ENCODE measurements at regions of chr12 and their contacts with region 1.

Region 1: DNA sequence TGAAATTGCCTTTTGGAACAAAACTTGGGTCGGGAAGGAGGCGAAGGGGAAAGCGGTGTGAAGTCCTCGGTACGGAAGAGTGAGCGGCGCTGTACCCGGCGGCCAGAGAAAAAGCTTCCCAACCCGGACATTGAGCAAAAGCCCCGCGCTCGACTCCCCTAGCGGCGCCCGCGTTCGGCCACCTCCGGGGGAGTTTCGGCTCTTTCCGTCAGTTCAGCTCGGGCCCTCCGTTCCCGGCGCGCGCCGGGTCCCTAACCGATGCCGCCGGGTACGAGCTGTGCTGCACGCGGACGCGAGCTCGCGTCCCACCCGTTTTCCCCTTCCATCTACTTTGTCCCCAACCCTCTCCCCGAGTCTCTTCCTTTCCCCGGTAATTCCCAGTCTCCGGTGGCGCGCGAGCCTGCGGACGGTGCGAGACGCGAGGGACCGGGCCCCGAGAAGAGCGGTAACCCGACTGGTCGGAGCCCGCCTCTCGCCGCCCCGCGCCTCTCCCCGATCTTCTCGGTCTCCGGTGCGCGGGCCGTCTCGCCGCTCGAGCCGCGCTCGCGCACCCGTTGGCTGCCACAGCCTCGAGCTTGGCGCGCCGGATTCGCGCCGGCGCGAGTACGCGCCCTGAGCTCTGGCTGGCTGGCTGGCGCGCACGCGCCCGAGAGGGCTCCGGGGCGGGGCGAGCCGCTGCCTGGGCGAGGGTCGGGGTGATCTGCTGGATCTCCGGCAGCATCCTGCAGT is 446 bp upstream of the SPATS2 start:
- DNase-seq: peak; percentile 98

Region 2: GRCh38 chr12:49515266-49515665 is 148.4 kb after region 1 on chr12:
- in situ Hi-C with region 1: loop called (anchors 10 kb)
- DNase-seq: peak; percentile 93